Body of pancreas (tissue), 4 donors: ENCODE measurements at regions of chr7 and their contacts with region 1.

Region 1: GRCh38 chr7:138008547-138009349 is 6.9 kb upstream of the CREB3L2 start:
- DNase-seq: peak in 2 of 4 donors; percentile 22 to 40
- ATAC-seq: peak; percentile 78
- H3K4me3 ChIP-seq: no peak overlapping the region
- H3K27ac ChIP-seq: no peak overlapping the region
- H3K4me1 ChIP-seq: peaks cover 4% of the 10 kb centered on the region
- H3K27me3 ChIP-seq: no peaks in the 10 kb centered on the region
- CTCF ChIP-seq: peak; percentile 74 to 97 (median 90)
- POLR2A ChIP-seq: no peak

Region 2: DNA sequence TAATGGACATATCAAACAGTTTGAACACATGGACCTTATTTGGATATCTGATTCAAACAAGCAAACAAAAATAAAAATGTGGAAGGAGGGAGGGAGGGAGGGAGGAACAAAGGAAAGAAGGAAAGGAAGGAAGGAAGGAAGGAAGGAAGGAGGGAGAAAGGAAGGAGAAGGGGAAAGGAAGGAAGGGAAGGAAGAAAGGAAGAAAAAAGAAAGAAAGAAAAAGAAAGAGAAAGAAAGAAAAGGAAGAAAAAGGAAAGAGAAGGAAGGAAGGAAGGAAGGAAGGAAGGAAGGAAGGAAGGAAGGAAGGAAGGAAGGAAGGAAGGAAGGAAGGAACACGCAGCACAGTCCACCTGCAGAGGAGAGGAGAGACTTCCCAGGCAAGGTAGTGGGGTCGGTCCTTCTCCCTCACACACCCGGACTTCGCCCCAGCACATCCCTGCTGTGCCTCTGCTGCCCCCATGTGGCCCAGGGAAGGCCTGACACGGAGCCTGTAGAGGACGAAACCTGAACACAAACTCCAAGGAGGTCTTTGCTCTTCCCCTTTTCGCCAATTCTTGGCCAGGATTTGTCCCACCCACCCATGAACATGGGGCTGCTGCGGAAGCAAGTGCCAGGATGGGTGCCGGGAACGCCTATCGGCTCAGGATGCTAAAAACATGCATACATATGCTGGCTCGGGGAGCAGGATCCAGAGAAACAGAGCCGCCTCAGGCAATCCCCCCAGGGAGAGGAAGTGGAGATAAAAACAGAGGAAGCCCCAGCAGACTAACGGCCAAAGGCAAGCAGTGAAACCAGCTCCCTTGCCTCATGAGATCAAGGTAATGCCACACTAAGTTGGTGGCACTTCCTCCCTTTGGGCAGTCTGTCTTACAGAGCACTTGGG is 109.7 kb before region 1 on chr7:
- intact Hi-C with region 1: loop called (anchors 2 kb)
- DNase-seq: peak; percentile 75 to 82 (median 78)
- ATAC-seq: peak; percentile 88
- H3K4me3 ChIP-seq: no peak overlapping the region
- H3K27ac ChIP-seq: no peak overlapping the region
- H3K4me1 ChIP-seq: no peaks in the 10 kb centered on the region
- H3K27me3 ChIP-seq: no peaks in the 10 kb centered on the region
- CTCF ChIP-seq: peak; percentile 74 to 91 (median 83)
- POLR2A ChIP-seq: no peak

Region 3: GRCh38 chr7:138223402-138223879 is 214.7 kb after region 1 on chr7:
- intact Hi-C with region 1: no loop called
- DNase-seq: no peak
- ATAC-seq: no peak
- H3K4me3 ChIP-seq: no peak overlapping the region
- H3K27ac ChIP-seq: no peak overlapping the region
- H3K4me1 ChIP-seq: no peaks in the 10 kb centered on the region
- H3K27me3 ChIP-seq: no peaks in the 10 kb centered on the region
- CTCF ChIP-seq: no peak
- POLR2A ChIP-seq: no peak

Region 4: DNA sequence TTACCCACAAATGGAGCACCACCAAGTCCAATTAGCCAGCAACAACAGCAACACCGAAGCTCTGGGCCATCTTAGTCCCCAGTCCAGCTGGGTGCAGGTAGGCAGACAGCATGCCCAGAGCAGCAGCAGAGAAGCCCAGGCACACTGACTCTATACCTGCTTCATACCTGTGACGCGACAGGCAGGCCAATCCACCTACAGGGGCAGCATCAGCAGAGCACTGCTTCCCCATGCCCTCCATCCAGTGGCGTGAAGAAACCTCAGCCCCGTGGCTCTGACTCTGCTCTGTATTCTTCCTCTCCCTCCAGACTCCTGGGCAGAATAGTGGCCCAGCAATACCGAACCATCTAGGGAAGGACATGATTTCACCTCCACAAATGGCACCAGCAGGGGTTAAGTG is 259.2 kb after region 1 on chr7:
- intact Hi-C with region 1: no loop called
- DNase-seq: no peak
- ATAC-seq: no peak
- H3K4me3 ChIP-seq: no peak overlapping the region
- H3K27ac ChIP-seq: no peak overlapping the region
- H3K4me1 ChIP-seq: no peaks in the 10 kb centered on the region
- H3K27me3 ChIP-seq: no peaks in the 10 kb centered on the region
- CTCF ChIP-seq: no peak
- POLR2A ChIP-seq: no peak